T-cell (primary cell): ENCODE measurements at regions of chr15 and their contacts with region 1.

Region 1: GRCh38 chr15:90701880-90702630 is 15.1 kb upstream of the BLM start:
- DNase-seq: no peak
- ATAC-seq: no peak
- H3K4me3 ChIP-seq: no peak overlapping the region
- H3K4me3 Mint-ChIP-seq: no peak overlapping the region
- H3K27ac ChIP-seq: no peak overlapping the region
- H3K27ac Mint-ChIP-seq: no peak overlapping the region
- H3K4me1 ChIP-seq: peaks cover 0 to 2% of the 10 kb centered on the region in 2 experiments
- H3K4me1 Mint-ChIP-seq: peaks cover 0 to under 1% (median 0%) of the 10 kb centered on the region in 3 donors
- H3K27me3 ChIP-seq: no peaks in the 10 kb centered on the region
- H3K27me3 Mint-ChIP-seq: no peaks in the 10 kb centered on the region

Region 2: DNA sequence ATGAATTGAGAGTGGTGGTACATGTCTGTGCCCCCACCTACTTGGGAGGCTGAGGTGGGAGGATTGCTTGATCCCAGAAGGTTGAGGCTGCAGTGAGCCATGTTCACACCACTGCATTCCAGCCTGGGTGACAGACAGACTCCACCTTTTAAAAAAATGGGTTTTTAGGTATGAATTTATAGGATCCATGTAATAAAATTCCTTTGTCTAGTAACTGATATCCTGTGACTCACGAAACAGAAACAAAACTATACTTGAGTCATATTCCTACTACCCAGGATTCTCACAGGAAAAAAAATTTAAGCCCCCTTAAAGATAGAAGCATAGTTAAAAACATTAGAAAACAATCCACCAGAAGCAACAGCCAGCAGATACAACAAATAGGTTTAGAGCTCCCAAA is 182.4 kb before region 1 on chr15:
- CTCF ChIA-PET with region 1: no interaction called
- POLR2A ChIA-PET with region 1: interaction called in 1 of 2 experiments, 11 read pairs
- DNase-seq: no peak
- ATAC-seq: no peak
- H3K4me3 ChIP-seq: no peak overlapping the region
- H3K4me3 Mint-ChIP-seq: no peak overlapping the region
- H3K27ac ChIP-seq: no peak overlapping the region
- H3K27ac Mint-ChIP-seq: no peak overlapping the region
- H3K4me1 ChIP-seq: no peaks in the 10 kb centered on the region
- H3K4me1 Mint-ChIP-seq: peaks cover 0 to 2% (median 0%) of the 10 kb centered on the region in 3 donors
- H3K27me3 ChIP-seq: no peaks in the 10 kb centered on the region
- H3K27me3 Mint-ChIP-seq: no peaks in the 10 kb centered on the region

Region 3: GRCh38 chr15:90665288-90666134 is 36.5 kb before region 1 on chr15:
- CTCF ChIA-PET with region 1: no interaction called
- POLR2A ChIA-PET with region 1: no interaction called
- DNase-seq: peak in 22 of 35 experiments; percentile 9 to 45 (median 21)
- ATAC-seq: peak; percentile 47 to 59 (median 52)
- H3K4me3 ChIP-seq: peak overlapping the region; percentile 65 to 74
- H3K4me3 Mint-ChIP-seq: peak overlapping the region; percentile 72 to 87 (median 74)
- H3K27ac ChIP-seq: peak overlapping the region; percentile 49
- H3K27ac Mint-ChIP-seq: peak overlapping the region in 1 of 2 donors; percentile 46
- H3K4me1 ChIP-seq: peaks cover 20 to 45% of the 10 kb centered on the region in 2 experiments
- H3K4me1 Mint-ChIP-seq: peaks cover 42 to 50% (median 50%) of the 10 kb centered on the region in 3 donors
- H3K27me3 ChIP-seq: peaks cover 0 to 41% of the 10 kb centered on the region in 2 experiments
- H3K27me3 Mint-ChIP-seq: peaks cover 0 to 13% of the 10 kb centered on the region in 2 donors

Region 4: GRCh38 chr15:90816401-90817119 is 114.5 kb after region 1 on chr15:
- CTCF ChIA-PET with region 1: no interaction called
- POLR2A ChIA-PET with region 1: interaction called in 1 of 2 experiments, 11 read pairs
- DNase-seq: peak in 12 of 35 experiments; percentile 12 to 41 (median 21)
- ATAC-seq: peak in 1 of 4 experiments; percentile 27
- H3K4me3 ChIP-seq: no peak overlapping the region
- H3K4me3 Mint-ChIP-seq: no peak overlapping the region
- H3K27ac ChIP-seq: peak overlapping the region; percentile 13
- H3K27ac Mint-ChIP-seq: peak overlapping the region; percentile 61 to 70
- H3K4me1 ChIP-seq: peaks cover 2 to 50% of the 10 kb centered on the region in 2 experiments
- H3K4me1 Mint-ChIP-seq: peaks cover 12 to 49% (median 44%) of the 10 kb centered on the region in 3 donors
- H3K27me3 ChIP-seq: peaks cover 0 to 3% of the 10 kb centered on the region in 2 experiments
- H3K27me3 Mint-ChIP-seq: no peaks in the 10 kb centered on the region